ENCODE measurements at regions of chr16 and their contacts with region 1.

Region 1: GRCh38 chr16:86643671-86644070 is 65.3 kb downstream of the FOXL1 start:
- DNase-seq: peak in 1 of 2 donors; percentile 34
- H3K4me3 ChIP-seq: no peak overlapping the region
- CTCF ChIP-seq: no peak
- POLR2A ChIP-seq: no peak

Region 2: DNA sequence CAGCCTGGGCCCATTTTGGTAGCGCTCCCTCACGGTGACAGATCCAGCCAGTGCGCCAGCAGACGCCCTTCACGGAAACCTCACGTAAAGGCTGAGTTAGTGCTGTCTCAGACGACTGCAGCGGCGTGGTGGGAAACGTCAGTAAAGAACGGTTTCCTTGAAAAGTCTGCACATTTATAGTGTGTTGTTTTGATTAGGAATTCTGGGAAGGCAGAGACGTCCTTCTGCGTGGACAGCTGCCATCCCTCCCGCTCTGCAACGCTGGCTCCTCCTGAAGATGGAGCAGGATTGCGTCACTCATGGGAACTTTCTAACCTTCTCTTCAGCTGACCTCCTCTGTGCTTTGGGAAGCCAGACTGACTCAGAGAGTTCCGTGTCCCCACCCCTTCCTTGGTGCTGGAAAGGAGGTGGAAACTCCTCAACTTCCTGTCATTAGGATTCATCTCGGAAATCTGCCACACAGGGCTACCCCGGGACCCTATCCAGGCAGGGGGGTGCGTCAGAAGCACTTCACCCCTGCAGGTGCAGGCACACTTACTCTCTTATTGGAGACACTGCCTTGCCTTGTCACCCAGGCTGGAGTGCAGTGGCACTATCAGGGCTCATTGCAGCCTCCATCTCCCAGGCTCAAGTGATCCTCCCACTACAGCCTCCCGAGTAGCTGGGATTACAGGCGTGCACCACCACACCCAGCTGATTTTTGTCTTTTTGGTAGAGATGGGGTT is 1848.2 kb before region 1 on chr16:
- intact Hi-C with region 1: no loop called
- DNase-seq: peak; percentile 74 to 94
- H3K4me3 ChIP-seq: no peak overlapping the region
- CTCF ChIP-seq: no peak
- POLR2A ChIP-seq: no peak

Region 3: GRCh38 chr16:86554917-86555703 is 88.6 kb before region 1 on chr16 and contains the start of gene MTHFSD:
- intact Hi-C with region 1: no loop called
- DNase-seq: peak; percentile 87 to 99
- H3K4me3 ChIP-seq: peak within 1 kb of the TSS; percentile 84
- CTCF ChIP-seq: no peak
- POLR2A ChIP-seq: no peak
- total RNA-seq, gene MTHFSD: 14.5 to 34.8 (median 25.5) TPM

Region 4: DNA sequence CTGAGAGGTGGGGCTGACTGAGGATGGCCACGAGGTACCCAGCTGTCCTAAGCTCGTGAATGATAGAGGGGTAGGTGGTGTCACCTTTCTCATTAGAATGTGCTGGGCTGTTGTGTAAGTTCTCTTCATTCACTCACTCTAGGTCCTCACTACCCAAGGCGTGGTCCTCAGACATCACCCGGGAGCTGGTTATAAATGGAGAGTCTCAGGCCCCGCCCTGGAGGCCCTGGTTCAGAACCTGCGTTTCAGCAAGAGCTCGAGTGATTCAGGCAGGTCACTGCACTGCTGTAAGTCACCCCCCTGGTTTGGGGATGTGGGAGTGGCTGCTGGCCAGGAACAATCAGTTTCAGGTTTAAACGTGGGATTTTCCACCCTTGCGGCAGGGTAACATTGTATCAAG is 74.4 kb after region 1 on chr16:
- intact Hi-C with region 1: loop called (anchors 2 kb)
- DNase-seq: no peak
- H3K4me3 ChIP-seq: no peak overlapping the region
- CTCF ChIP-seq: no peak
- POLR2A ChIP-seq: no peak

Region 5: DNA sequence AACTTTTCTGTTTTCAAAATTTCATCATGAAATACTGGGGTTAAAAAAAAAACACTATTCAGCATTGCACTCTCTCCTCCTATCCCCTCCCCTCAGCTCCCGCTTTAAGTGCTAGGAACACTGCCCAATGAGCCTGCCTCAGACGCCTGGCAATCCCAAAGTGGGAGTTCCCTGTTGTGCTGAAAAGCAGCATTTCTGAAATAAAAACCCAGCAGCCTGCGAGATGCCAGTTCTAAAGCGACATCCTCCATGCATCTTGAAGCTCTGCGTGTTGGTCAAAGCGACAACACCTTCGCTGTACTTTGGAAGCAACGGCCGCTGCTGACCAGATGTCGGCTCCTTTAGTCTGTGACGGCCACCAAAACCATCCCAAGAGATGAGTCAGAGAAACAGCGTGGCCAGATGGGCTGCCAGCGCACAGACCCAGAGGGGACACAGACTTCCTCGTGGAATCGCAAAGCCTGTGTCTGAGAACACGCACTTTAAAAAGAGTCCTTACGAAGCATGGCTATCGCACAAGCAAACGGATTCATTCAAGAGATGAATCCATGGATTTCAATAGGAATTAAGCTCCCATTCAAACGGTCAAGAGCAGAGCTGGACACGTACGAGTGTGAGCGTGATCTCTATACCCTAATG is 707.1 kb after region 1 on chr16:
- intact Hi-C with region 1: no loop called
- DNase-seq: no peak
- H3K4me3 ChIP-seq: no peak overlapping the region
- CTCF ChIP-seq: no peak
- POLR2A ChIP-seq: no peak